ENCODE measurements at regions of chr6 and their contacts with region 1.

Region 1: DNA sequence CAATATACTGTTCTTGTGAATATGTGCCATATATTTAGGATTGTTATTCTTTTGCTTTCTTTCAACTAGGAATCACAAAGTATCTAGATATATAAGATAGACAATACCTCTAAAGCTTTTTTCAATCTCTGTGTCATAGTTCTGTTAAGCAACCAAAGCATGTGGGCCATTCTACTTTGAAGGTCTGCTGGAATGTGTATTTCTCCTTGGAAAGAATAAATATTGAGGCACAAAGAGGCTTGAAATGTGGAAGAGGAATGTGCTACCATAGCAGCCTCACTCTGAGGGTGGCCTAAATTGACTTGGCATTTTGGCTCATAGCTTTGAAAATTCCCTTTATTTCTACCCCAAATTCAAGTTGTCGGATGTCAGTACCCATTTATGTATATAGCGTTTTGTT is 488.5 kb upstream of the MAN1A1 start:
- DNase-seq: no peak
- ATAC-seq: no peak

Region 2: GRCh38 chr6:119179842-119180241 is 658.2 kb before region 1 on chr6:
- intact Hi-C with region 1: no loop called
- DNase-seq: no peak
- ATAC-seq: no peak

Region 3: DNA sequence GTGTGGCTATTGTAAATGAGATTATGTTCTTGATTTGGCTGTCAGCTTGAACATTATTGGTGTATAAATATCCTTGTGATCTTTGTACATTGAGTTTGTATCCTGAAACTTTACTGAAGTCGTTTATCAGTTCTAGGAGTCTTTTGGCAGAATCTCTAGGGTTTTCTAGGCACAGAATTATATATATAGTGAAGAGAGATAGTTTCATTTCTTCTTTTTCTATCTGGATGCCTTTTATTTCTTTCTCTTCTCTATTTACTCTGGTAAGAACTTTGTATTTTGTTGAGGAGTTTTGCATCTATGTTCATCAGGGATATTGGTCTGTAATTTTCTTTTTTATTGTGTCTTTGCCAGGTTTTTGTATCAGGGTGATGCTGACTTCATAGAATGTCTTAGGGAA is 100.7 kb after region 1 on chr6:
- intact Hi-C with region 1: no loop called
- DNase-seq: no peak
- ATAC-seq: no peak

Region 4: GRCh38 chr6:120471749-120472148 is 633.7 kb after region 1 on chr6:
- intact Hi-C with region 1: loop called (anchors 5 kb)
- DNase-seq: no peak
- ATAC-seq: no peak